Activated CD4-positive, alpha-beta memory T cell treated with anti-CD3 and anti-CD28 coated beads, Interleukin-2, amount 10 ng/mL, durations not matched to agents 7 days and 5 days (primary cell): ENCODE measurements at regions of chr17 and their contacts with region 1.

Region 1: GRCh38 chr17:42019509-42020404 is at the start of gene NKIRAS2:
- DNase-seq: peak; percentile 95
- H3K4me3 Mint-ChIP-seq: peak within 1 kb of the TSS; percentile 99
- H3K27ac Mint-ChIP-seq: peak within 1 kb of the TSS; percentile 97
- H3K4me1 Mint-ChIP-seq: peaks cover 59% of the 10 kb centered on the region
- H3K27me3 Mint-ChIP-seq: no peaks in the 10 kb centered on the region
- total RNA-seq, gene NKIRAS2: 21.3 to 22.7 TPM

Region 2: DNA sequence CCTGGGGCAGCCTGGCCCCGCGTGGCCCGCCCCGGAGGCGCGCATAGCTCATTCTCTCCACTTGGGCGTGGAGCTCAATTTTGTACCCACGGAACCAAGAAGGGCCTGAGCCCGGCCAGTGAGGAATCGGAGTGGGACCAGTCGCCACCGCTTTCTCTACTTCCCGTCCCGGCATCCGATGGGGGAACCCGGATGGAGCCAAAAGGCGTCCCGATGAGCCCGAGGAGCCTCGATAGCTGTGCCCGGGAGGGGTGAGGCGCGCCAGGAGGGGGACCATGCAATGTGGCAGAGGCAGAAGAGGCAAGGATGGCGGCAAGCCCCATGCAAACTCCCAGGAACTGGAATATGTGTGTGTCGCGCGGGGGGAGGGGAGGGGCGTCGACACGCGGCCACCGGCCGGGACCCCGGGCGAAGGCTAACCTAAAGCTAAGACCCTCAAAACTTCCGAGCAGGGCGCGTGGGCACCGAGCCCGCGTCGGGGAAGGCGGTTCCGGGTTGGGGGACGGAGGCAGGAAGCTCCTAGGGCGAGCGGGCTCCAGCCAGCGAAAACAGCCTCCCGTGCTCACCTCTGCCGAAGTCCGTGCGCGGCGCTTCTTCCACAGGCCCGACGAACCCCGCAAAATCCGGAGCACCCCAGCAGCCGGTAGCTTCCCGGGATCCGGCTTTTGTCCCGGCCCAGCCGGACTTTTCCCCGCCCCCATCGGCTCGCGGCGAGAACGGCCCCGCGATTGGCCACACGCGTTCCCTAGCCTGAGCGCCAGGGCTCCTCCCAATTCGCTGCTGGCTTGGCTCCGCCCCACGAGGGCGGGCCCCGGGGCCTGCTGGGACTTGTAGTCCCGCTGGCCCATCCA is 101.2 kb before region 1 on chr17 and contains the start of gene ACLY:
- CTCF ChIA-PET with region 1: interaction called, 11 read pairs
- POLR2A ChIA-PET with region 1: interaction called, 24 read pairs
- DNase-seq: peak; percentile 97
- H3K4me3 Mint-ChIP-seq: peak within 1 kb of the TSS; percentile 96
- H3K27ac Mint-ChIP-seq: peak within 1 kb of the TSS; percentile 90
- H3K4me1 Mint-ChIP-seq: peaks cover 38% of the 10 kb centered on the region
- H3K27me3 Mint-ChIP-seq: no peaks in the 10 kb centered on the region
- total RNA-seq, gene ACLY: 177 to 183 TPM

Region 3: GRCh38 chr17:41966463-41967140 is 53.2 kb before region 1 on chr17 and contains the start of gene CNP:
- CTCF ChIA-PET with region 1: interaction called, 30 read pairs
- POLR2A ChIA-PET with region 1: interaction called, 112 read pairs
- DNase-seq: peak; percentile 93
- H3K4me3 Mint-ChIP-seq: peak within 1 kb of the TSS; percentile 81
- H3K27ac Mint-ChIP-seq: peak within 1 kb of the TSS; percentile 84
- H3K4me1 Mint-ChIP-seq: peaks cover 50% of the 10 kb centered on the region
- H3K27me3 Mint-ChIP-seq: no peaks in the 10 kb centered on the region
- total RNA-seq, gene CNP: 89.8 to 91.0 TPM

Region 4: DNA sequence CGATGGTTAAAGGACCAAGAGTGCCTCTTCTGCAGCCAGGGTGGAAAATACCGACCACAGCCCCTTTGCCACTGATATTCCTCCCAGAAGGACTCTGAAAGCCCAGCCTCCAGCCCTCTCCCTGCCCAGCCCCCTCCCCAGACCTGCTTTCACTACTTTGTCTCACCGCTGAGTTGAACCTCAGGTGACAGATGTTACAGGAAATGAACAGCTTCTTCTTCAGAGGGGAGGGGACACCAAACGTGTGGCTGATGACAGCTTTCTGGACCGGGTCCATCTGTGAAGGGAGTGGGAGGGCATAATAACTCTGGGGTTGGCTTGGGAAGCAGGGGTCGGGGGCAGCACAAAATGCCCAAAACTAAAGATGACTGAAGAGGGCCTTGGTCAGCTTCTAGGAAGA is 14.3 kb after region 1 on chr17:
- CTCF ChIA-PET with region 1: interaction called, 7 read pairs
- POLR2A ChIA-PET with region 1: interaction called, 10 read pairs
- DNase-seq: no peak
- H3K4me3 Mint-ChIP-seq: no peak overlapping the region
- H3K27ac Mint-ChIP-seq: no peak overlapping the region
- H3K4me1 Mint-ChIP-seq: peaks cover 6% of the 10 kb centered on the region
- H3K27me3 Mint-ChIP-seq: peaks cover 12% of the 10 kb centered on the region

Region 5: DNA sequence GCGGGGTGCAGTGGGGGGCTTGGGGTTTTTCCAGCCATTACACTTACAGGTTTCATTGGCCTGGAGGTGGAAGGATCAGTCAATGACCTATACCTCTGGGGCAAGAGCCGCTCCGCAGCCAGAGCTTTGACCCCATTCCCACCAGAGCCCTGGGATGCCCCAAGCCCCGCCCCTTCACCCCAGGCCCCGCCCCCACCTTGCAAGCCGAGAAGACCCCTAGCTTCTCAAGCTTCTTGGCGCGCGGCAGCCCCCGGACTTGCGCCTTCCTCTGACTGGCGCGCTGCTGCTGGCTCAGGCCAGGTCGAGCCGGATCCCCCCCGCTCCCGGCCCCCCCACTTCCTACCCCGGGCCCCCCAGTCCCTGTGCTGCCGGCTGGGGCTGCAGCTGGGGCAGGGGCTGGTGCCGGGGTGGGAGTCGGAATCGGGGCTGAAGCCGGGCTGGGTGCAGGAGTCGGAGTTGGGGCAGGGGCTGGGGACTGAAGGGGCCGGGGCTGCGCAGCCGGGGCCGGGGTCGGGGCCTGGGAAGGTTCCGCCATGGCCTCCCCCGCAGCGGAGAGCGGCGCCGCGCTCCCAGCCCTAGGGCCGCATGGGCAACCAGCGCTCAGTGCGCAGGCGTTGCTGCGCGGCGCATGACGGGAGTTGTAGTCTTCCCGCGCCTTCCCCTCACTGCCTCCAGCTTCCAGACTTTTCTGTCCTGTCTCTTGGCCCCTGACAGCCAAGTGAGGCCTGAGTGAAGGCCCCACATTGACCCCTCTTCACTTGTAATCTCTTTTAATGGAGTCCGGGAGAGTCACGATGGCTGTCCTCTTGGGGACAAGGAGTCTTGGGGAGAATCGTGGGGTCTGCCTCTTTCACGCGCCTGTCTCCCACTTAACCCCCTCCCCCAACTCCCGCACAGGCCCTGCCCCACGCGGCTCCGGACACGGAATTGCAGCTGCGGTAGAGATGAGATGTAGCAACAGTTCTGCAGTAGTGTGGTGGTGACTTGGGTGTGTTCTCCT is 101.3 kb after region 1 on chr17 and contains the start of gene KAT2A:
- CTCF ChIA-PET with region 1: interaction called, 16 read pairs
- POLR2A ChIA-PET with region 1: interaction called, 237 read pairs
- DNase-seq: peak; percentile 80
- H3K4me3 Mint-ChIP-seq: peak within 1 kb of the TSS; percentile 61
- H3K27ac Mint-ChIP-seq: peak within 1 kb of the TSS; percentile 54
- H3K4me1 Mint-ChIP-seq: peaks cover 37% of the 10 kb centered on the region
- H3K27me3 Mint-ChIP-seq: no peaks in the 10 kb centered on the region
- total RNA-seq, gene KAT2A: 25.7 to 26.7 TPM

Region 6: DNA sequence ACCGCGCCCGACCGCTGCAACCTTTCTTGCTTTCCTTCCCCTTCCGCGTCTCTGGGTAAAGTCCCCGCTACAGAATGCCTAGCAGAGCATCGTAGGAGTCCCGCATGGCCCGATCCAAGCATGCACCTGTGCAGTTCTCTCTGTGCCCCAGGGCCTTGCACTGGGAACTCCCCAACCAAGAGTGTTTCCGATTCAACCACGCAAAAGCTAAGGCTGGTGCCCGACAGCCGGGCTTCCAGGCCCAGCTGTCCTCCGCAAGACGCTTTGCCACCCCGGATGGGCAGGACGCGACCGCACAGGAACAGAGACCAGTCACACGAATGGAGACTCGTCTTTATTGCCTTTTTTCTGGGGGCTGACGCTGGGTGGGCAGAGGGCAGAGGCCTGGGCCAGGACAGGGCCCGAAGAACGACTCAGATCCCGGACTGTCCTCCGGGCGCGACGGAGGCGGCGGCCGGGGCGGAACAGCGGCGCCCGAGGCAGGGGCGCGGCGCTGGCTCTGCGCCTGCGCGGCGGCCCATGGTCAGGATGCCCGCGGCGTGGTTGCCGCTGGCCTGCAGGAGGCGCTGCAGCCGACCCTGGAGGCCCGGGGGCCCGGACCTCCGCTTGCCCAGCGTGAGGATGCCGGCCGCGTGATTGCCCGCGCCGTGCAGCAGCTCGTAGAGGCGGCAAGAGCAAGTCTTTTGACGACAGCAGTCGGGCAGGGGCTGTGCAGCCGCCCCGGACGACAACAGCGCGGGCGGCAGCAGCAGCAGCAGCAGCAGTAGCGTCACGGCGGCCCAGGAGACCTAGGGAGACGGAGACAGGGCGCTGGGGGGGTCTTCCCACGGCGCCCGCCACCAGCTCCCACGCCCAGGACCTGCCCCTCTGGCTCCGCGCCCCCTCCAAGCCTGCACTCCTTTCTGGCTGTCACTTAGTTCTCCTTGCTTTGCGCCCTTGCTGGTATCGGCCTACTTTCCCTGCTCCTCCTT is 164.3 kb after region 1 on chr17:
- CTCF ChIA-PET with region 1: interaction called, 9 read pairs
- POLR2A ChIA-PET with region 1: interaction called, 11 read pairs
- DNase-seq: peak; percentile 84
- H3K4me3 Mint-ChIP-seq: peak overlapping the region; percentile 93
- H3K27ac Mint-ChIP-seq: peak overlapping the region; percentile 85
- H3K4me1 Mint-ChIP-seq: peaks cover 50% of the 10 kb centered on the region
- H3K27me3 Mint-ChIP-seq: peaks cover 16% of the 10 kb centered on the region